ENCODE measurements at regions of chr16 and their contacts with region 1.

Region 1: GRCh38 chr16:1964506-1965395 is at the start of gene RPS2:
- DNase-seq: peak; percentile 100
- CTCF ChIP-seq: no peak

Region 2: GRCh38 chr16:1782352-1783091 is 182.2 kb before region 1 on chr16 and contains the starts of genes NUBP2 and SPSB3:
- CTCF ChIA-PET with region 1: no interaction called
- POLR2A ChIA-PET with region 1: interaction called, 24 read pairs
- DNase-seq: peak; percentile 98
- CTCF ChIP-seq: no peak

Region 3: DNA sequence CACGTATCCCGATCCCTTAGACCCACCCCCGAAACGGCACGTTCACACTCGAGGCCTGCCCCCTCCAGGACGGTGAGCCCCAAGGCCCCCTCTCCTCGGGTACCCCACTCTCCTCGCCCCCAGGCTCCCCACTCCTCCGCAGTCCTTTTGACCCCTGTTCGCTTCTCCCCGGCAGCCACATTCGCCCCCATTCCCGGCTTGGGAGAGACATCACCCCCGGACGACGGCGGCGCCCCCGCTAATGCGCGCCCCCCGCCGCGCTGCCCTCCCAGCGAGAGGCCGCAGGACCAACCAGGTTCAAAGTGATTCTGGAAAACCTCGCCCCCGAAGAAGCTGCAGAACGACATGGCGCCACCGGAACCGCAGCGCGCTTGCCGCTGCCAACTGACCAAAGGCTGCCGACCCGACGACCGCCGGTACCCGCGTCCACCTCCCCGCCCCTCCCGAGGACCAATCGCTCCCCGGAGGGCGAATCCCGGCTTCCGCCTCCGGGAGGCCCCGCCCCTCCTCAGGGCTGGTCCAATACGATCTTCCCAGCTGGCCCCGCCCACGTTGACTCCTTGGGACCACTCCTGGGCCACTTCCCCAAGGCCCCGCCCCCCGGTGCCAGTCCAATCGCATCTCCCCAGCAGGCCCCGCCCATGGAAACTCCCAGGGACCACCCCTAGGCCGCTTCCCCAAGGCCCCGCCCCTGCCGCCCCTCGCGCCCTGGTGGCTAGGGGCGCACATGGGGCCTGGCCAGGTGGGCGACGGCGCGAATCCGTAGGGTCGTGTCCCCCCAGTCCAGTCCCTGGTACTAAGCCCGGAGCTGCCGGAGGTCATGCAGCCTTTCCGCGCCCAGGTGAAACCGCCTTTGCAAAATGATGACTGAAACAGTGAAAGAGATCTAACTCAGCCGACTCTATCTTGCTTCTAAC is 21.7 kb before region 1 on chr16 and contains the start of gene MSRB1:
- CTCF ChIA-PET with region 1: interaction called, 5 read pairs
- POLR2A ChIA-PET with region 1: interaction called, 19 read pairs
- DNase-seq: peak; percentile 100
- CTCF ChIP-seq: no peak

Region 4: GRCh38 chr16:1983544-1984346 is 19.0 kb after region 1 on chr16 and contains the start of gene GFER:
- CTCF ChIA-PET with region 1: interaction called, 3 read pairs
- POLR2A ChIA-PET with region 1: interaction called, 21 read pairs
- DNase-seq: peak; percentile 97
- CTCF ChIP-seq: peak; percentile 68

Region 5: DNA sequence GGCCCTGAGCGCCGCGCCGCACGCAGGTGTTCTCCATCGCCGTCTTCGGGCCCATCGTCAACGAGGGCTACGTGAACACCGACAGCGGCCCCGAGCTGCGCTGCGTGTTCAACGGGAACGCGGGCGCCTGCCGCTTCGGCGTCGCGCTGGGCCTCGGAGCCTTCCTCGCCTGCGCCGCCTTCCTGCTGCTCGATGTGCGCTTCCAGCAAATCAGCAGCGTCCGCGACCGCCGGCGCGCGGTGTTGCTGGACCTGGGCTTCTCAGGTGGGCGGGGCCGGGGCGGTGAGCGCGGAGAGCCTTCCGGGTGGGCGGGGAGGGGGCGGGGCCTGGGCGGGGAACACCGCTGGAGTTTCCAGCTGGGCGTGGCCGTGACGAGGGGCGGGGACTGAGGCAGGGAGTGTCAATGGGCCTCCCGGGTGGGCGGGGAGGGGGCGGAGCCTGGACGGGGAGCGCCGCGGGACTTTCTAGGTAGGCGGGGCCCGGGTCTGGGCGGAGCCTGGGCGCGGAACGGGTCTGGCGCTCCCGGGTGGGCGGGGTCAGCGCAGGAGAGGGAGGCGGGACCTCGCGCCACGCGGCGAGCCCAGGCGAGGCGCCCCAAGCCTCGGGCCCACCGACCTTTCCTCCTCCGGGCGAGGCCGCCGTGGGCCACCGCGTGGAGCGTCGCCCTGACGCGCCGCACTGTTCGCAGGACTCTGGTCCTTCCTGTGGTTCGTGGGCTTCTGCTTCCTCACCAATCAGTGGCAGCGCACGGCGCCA is 27.4 kb after region 1 on chr16:
- CTCF ChIA-PET with region 1: no interaction called
- POLR2A ChIA-PET with region 1: interaction called, 22 read pairs
- DNase-seq: peak; percentile 100
- CTCF ChIP-seq: no peak